H1 (cell line): ENCODE measurements at regions of chr6 and their contacts with region 1.

Region 1: DNA sequence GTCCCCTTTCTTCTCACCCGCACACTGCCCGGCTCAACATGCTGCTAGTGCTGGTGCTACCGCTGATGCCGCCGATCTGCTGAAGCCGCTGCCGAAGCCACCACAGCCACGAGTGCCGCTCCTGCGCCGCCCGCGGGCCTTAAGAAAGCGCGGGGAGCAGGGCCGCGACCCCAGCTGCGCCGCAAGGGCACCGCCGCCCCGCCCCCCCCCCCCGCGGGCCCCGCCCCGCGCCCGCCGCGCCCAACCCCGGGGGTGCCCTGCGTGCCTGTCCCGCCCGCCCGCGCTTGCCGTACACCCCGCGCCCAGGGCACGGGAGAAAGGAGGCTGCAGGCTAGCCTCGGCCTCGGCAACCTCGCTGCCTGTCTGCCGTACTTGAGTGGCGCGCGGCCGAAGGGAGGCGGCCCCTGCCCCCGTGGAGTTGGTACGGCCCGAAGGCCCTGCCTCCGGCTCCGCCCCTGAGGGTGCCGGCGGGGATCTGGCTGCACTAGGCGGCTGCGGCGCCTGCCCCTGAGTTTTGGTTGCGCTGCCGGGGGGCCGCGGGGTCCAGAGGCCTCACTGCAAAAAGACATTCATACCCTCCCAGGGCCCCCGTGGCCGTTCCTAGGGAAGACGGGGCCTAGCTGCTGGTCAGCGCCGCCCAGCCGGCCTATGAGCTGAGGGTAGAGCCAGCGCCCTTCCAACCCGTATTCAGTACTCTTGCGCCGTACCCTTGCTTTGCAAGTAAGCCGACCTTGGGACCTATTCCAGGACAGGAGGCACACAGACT is at the start of gene SOD2:
- DNase-seq: peak; percentile 53 to 92
- H3K4me3 ChIP-seq: peak within 1 kb of the TSS; percentile 51 to 99 (median 88)
- H3K27ac ChIP-seq: peak within 1 kb of the TSS; percentile 95
- H3K4me1 ChIP-seq: peaks cover 3 to 15% (median 8%) of the 10 kb centered on the region in 4 experiments
- H3K27me3 ChIP-seq: no peaks in the 10 kb centered on the region
- CTCF ChIP-seq: no peak; a peak in 1 of 4 replicates
- EP300 ChIP-seq: peak in 1 of 2 experiments; percentile 96; a peak in 2 of 3 replicates
- POLR2A ChIP-seq: peak; percentile 74 to 85
- RAD21 ChIP-seq: no peak
- total RNA-seq, gene SOD2: 88.7 and 96.9 TPM in 2 replicates

Region 2: DNA sequence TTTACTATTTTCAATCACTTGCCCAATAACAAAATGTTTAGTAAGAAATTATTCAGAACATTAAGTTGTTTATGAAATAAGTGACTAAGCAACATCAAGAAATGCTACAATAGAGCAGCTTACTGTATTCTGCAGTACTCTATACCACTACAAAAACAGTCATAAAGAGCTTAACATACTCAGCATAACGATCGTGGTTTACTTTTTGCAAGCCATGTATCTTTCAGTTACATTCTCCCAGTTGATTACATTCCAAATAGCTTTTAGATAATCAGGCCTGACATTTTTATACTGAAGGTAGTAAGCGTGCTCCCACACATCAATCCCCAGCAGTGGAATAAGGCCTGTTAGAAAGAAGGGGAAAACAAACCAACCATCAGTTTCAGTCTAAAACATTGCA is 11.0 kb before region 1 on chr6:
- CTCF ChIA-PET with region 1: interaction called, 7 read pairs
- POLR2A ChIA-PET with region 1: interaction called, 22 read pairs
- DNase-seq: no peak
- H3K4me3 ChIP-seq: no peak overlapping the region
- H3K27ac ChIP-seq: no peak overlapping the region
- H3K4me1 ChIP-seq: no peaks in the 10 kb centered on the region
- H3K27me3 ChIP-seq: no peaks in the 10 kb centered on the region
- CTCF ChIP-seq: no peak
- EP300 ChIP-seq: no peak
- POLR2A ChIP-seq: no peak
- RAD21 ChIP-seq: no peak

Region 3: DNA sequence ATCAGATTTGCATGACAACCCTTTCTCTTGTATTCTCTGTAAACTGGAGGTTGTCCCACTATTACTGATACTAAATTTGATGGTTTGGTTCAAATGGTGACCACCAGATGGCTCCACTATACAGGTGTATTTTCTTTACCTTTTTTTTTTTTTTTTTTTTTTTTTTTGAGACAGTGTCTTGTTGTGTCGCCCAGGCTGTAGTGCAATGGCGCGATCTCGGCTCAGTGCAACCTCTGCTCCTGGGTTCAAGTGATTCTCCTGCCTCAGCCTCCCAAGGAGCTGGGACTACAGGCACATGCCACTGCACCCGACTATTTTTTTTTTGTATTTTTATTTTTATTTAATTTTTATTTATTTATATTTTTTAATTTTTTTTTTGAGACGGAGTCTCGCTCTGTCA is 27.4 kb after region 1 on chr6:
- CTCF ChIA-PET with region 1: interaction called, 16 read pairs
- POLR2A ChIA-PET with region 1: interaction called, 32 read pairs
- DNase-seq: no peak
- H3K4me3 ChIP-seq: no peak overlapping the region
- H3K27ac ChIP-seq: no peak overlapping the region
- H3K4me1 ChIP-seq: no peaks in the 10 kb centered on the region
- H3K27me3 ChIP-seq: no peaks in the 10 kb centered on the region
- CTCF ChIP-seq: peak in 2 of 3 experiments; percentile 14 to 45; a peak in 2 of 4 replicates
- EP300 ChIP-seq: no peak
- POLR2A ChIP-seq: no peak
- RAD21 ChIP-seq: peak; percentile 34 to 39; a peak in 3 of 4 replicates

Region 4: DNA sequence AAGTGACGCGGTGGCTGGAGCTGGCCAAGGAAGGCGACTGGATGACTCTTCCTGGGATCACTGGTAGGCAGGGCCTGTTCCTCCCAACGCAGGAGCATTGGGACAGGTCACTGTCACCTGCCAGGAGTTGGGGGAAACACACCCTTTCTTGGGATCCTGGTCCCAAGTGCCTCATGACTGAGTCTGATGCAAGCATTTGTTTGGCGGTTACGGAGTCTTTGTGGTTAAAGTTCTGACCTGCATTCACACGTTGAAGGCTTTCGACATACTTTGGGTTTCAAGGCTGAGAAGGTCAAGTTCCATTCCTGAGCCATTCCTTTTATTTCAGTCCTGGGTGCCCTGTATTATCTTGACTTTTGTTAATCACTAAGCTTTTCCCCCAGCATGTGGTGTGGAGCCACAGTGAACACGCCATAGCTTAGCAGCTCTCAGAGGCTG is 112.7 kb after region 1 on chr6:
- CTCF ChIA-PET with region 1: no interaction called
- POLR2A ChIA-PET with region 1: no interaction called
- DNase-seq: no peak
- H3K4me3 ChIP-seq: no peak overlapping the region
- H3K27ac ChIP-seq: no peak overlapping the region
- H3K4me1 ChIP-seq: no peaks in the 10 kb centered on the region
- H3K27me3 ChIP-seq: no peaks in the 10 kb centered on the region
- CTCF ChIP-seq: no peak
- EP300 ChIP-seq: no peak
- POLR2A ChIP-seq: no peak
- RAD21 ChIP-seq: no peak

Region 5: DNA sequence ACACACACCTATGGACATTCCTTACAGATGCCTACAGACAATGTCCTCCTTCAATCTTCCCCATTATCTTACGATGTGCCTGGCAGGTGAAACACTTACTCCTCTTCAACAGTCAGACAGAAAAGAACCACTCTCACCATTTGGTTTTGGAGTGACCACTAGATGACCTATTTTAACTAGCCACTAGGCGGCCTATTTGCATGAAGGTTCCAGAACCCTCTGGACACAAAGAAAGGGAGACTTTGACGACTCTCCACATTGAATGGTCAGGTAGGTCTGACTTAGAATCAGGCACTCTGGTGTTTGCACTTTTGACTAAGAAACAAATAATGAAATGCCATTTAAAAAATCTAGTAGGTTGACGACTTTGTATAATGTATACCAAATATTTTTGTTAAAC is 148.7 kb after region 1 on chr6:
- CTCF ChIA-PET with region 1: no interaction called
- POLR2A ChIA-PET with region 1: no interaction called
- DNase-seq: no peak
- H3K4me3 ChIP-seq: no peak overlapping the region
- H3K27ac ChIP-seq: no peak overlapping the region
- H3K4me1 ChIP-seq: peaks cover 0 to 7% (median 4%) of the 10 kb centered on the region in 4 experiments; a peak in 4 of 7 replicates
- H3K27me3 ChIP-seq: no peaks in the 10 kb centered on the region
- CTCF ChIP-seq: peak in 2 of 3 experiments; percentile 53 to 60; a peak in 3 of 4 replicates
- EP300 ChIP-seq: no peak
- POLR2A ChIP-seq: no peak
- RAD21 ChIP-seq: peak; percentile 21 to 47; a peak in 2 of 4 replicates

Region 6: GRCh38 chr6:159853754-159854153 is 160.4 kb after region 1 on chr6:
- CTCF ChIA-PET with region 1: no interaction called
- POLR2A ChIA-PET with region 1: no interaction called
- DNase-seq: no peak
- H3K4me3 ChIP-seq: no peak overlapping the region
- H3K27ac ChIP-seq: no peak overlapping the region
- H3K4me1 ChIP-seq: no peaks in the 10 kb centered on the region
- H3K27me3 ChIP-seq: no peaks in the 10 kb centered on the region
- CTCF ChIP-seq: no peak
- EP300 ChIP-seq: no peak
- POLR2A ChIP-seq: no peak
- RAD21 ChIP-seq: no peak